Sciatic nerve (tissue), 2 donors: ENCODE measurements at regions of chr14 and their contacts with region 1.

Region 1: DNA sequence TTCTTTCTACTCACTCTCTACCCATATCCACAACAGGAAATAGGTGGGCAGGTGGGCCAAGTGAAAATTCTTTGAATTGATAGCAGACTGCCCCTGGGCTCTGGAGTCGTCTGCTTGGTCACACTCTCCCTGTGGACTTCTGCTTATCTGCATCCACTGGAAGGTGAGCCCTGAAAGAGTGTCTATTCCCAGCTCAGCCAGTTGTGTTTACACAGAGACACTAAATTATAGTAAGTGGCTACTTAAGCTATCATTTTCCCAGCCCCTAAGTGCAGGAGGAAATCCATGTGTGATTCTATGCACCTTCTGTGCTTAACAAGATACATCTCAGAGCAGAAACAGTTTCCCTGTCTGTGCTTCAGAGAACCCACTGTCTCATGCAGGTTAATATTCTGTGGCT is 338.4 kb downstream of the FUT8 start:
- DNase-seq: no peak
- ATAC-seq: no peak

Region 2: GRCh38 chr14:66698503-66698902 is 947.6 kb after region 1 on chr14:
- intact Hi-C with region 1: loop called (anchors 5 kb)
- DNase-seq: no peak
- ATAC-seq: no peak